Right ventricle myocardium superior (tissue), 1 donor: ENCODE measurements at regions of chr7 and their contacts with region 1.

Region 1: DNA sequence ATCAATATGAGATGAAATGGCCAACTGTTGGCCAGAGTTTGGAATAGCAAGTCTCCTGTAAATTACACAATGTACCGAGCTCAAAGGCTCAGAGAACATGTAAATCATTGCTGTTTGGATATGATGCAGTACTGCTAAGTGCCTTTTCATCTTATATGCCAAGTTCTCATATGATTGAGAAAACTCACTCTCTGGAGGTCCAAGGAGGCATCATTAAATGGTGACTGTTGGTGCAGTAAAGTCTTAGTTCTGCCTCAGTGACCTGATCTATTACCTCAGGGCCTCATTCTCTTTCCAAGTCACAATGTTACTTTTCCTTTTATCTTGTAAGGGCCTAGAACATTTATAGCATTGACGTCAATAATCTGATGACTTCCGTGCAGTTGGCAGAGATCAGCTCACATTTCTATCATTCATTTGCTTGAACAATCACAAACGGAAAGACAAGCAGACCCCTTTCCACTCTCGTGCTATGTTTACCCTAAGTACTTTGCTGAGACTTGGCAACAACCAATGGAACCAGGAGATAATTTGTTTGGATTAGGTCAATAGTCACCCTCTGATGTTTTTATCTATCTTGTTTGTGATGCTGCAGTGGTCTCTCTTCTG is 32.6 kb upstream of the PDK4 start:
- DNase-seq: no peak
- ATAC-seq: peak; percentile 83

Region 2: DNA sequence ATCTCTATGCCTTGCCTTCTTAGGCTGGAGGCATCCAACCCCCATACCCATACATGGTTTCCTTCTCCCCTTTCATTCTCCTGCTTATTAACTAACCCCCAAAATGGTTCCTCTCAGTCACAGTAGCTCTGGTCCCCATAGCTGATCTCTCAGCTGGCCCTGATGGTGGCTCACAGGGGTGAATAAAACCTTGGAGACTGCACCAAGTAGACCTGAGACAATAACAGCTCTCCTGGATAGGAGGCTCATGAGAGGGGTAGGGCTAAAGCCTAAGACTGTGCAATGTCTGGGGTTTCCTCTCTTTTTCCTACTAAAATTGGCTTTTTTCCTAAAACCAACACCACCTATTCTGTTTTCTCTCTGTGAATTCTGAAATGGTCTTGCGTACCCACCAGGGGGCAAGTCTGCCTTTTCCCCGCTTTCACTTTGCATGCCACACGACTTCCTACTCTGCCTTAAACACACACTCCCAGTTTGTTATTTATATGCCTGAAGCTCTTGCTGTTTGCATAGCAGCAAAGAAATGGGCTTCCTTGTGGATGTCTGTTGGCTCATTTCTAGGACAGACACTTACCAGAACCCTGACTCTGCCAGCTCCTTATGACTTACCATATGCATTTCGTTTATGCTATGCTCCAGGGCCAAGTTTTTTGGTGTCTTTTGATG is 286.2 kb before region 1 on chr7:
- intact Hi-C with region 1: no loop called
- DNase-seq: no peak
- ATAC-seq: no peak

Region 3: GRCh38 chr7:95454438-95455045 is 174.4 kb before region 1 on chr7:
- intact Hi-C with region 1: no loop called
- DNase-seq: no peak
- ATAC-seq: no peak

Region 4: GRCh38 chr7:95608359-95609173 is 20.4 kb before region 1 on chr7:
- intact Hi-C with region 1: loop called (anchors 2 kb)
- DNase-seq: peak; percentile 96
- ATAC-seq: peak; percentile 96